AG04450 (cell line): ENCODE measurements at regions of chr15 and their contacts with region 1.

Region 1: GRCh38 chr15:45187894-45188830 is at the start of gene SHF:
- DNase-seq: peak; percentile 21
- H3K4me3 ChIP-seq: peak within 1 kb of the TSS; percentile 76
- H3K27ac ChIP-seq: no peak within 1 kb of the TSS
- H3K27me3 ChIP-seq: peaks cover 17% of the 10 kb centered on the region
- CTCF ChIP-seq: no peak
- polyA plus RNA-seq, gene SHF: 4.1 and 4.7 TPM in 2 replicates

Region 2: GRCh38 chr15:45198337-45199135 is 10.4 kb after region 1 on chr15:
- CTCF ChIA-PET with region 1: interaction called, 38 read pairs
- POLR2A ChIA-PET with region 1: interaction called, 6 read pairs
- DNase-seq: peak; percentile 95
- H3K4me3 ChIP-seq: peak overlapping the region; percentile 94
- H3K27ac ChIP-seq: peak overlapping the region; percentile 92
- H3K27me3 ChIP-seq: no peaks in the 10 kb centered on the region
- CTCF ChIP-seq: peak; percentile 87